Activated CD4-positive, alpha-beta T cell treated with anti-CD3 and anti-CD28 coated beads for 36 hours (primary cell): ENCODE measurements at regions of chr6 and their contacts with region 1.

Region 1: GRCh38 chr6:25263657-25264056 is 15.5 kb upstream of the CARMIL1 start:
- DNase-seq: no peak
- ATAC-seq: no peak
- H3K4me3 Mint-ChIP-seq: no peak overlapping the region
- H3K27ac Mint-ChIP-seq: no peak overlapping the region
- H3K4me1 Mint-ChIP-seq: peaks cover 2% of the 10 kb centered on the region
- H3K27me3 Mint-ChIP-seq: peaks cover 8% of the 10 kb centered on the region

Region 2: GRCh38 chr6:25147223-25147622 is 116.4 kb before region 1 on chr6:
- CTCF ChIA-PET with region 1: no interaction called
- POLR2A ChIA-PET with region 1: no interaction called
- intact Hi-C with region 1: no loop called
- DNase-seq: no peak
- ATAC-seq: peak; percentile 75
- H3K4me3 Mint-ChIP-seq: no peak overlapping the region
- H3K27ac Mint-ChIP-seq: no peak overlapping the region
- H3K4me1 Mint-ChIP-seq: peaks cover 26% of the 10 kb centered on the region
- H3K27me3 Mint-ChIP-seq: no peaks in the 10 kb centered on the region

Region 3: DNA sequence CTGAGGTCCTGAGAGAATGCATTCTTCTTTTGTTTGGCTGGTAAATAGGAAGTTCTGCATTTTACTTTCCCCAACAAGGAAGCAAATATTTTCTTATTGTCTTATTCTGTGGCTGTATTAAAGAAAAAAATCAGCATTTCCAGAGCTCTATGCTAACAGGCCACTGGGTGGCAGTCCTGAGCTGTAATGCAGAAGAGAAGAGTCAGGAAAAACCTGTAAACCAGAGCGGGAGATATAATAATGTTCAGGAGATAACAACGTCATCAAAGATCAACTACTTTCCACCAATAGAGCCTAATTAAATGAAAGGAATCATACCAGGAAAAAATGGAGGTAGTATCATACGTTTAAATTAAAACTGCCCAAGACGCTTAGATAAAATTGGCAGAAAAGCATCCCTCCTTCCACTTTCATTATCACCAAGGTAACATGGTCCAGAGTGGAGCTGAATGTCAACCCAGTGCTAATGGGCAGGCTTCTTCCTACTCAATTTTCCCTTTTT is 40.1 kb before region 1 on chr6:
- CTCF ChIA-PET with region 1: interaction called, 16 read pairs
- POLR2A ChIA-PET with region 1: no interaction called
- intact Hi-C with region 1: loop called in 1 of 2 experiments (anchors 2 kb)
- DNase-seq: peak; percentile 80
- ATAC-seq: peak; percentile 66
- H3K4me3 Mint-ChIP-seq: peak overlapping the region; percentile 58
- H3K27ac Mint-ChIP-seq: no peak overlapping the region
- H3K4me1 Mint-ChIP-seq: peaks cover 9% of the 10 kb centered on the region
- H3K27me3 Mint-ChIP-seq: peaks cover 10% of the 10 kb centered on the region

Region 4: GRCh38 chr6:25278914-25279747 is 15.5 kb after region 1 on chr6 and contains the start of gene CARMIL1:
- CTCF ChIA-PET with region 1: interaction called, 29 read pairs
- POLR2A ChIA-PET with region 1: no interaction called
- intact Hi-C with region 1: no loop called
- DNase-seq: peak; percentile 82
- ATAC-seq: peak; percentile 75
- H3K4me3 Mint-ChIP-seq: peak within 1 kb of the TSS; percentile 82
- H3K27ac Mint-ChIP-seq: peak within 1 kb of the TSS; percentile 79
- H3K4me1 Mint-ChIP-seq: peaks cover 38% of the 10 kb centered on the region
- H3K27me3 Mint-ChIP-seq: peaks cover 5% of the 10 kb centered on the region
- total RNA-seq, gene CARMIL1: 4.5 to 4.9 TPM

Region 5: DNA sequence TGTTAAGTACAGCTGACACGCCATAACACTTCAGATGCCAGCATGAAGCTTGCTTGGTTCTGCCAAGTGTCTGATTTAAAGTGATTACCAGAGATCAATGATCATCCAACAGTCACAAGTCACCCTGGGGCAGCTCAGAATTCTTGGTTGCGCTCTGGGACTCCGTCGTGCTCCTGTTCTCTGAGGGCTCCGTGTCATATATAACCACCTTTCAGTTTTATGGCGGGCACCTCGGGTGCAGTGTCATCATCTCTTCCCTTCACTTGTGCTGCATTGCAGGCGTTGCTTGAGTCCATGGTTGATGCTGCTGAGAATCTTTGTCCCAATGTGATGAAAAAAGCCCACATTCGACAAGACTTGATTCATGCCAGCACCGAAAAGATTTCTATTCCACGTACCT is 287.0 kb after region 1 on chr6:
- CTCF ChIA-PET with region 1: interaction called, 45 read pairs
- POLR2A ChIA-PET with region 1: no interaction called
- intact Hi-C with region 1: no loop called
- DNase-seq: no peak
- ATAC-seq: no peak
- H3K4me3 Mint-ChIP-seq: no peak overlapping the region
- H3K27ac Mint-ChIP-seq: no peak overlapping the region
- H3K4me1 Mint-ChIP-seq: no peaks in the 10 kb centered on the region
- H3K27me3 Mint-ChIP-seq: no peaks in the 10 kb centered on the region

Region 6: DNA sequence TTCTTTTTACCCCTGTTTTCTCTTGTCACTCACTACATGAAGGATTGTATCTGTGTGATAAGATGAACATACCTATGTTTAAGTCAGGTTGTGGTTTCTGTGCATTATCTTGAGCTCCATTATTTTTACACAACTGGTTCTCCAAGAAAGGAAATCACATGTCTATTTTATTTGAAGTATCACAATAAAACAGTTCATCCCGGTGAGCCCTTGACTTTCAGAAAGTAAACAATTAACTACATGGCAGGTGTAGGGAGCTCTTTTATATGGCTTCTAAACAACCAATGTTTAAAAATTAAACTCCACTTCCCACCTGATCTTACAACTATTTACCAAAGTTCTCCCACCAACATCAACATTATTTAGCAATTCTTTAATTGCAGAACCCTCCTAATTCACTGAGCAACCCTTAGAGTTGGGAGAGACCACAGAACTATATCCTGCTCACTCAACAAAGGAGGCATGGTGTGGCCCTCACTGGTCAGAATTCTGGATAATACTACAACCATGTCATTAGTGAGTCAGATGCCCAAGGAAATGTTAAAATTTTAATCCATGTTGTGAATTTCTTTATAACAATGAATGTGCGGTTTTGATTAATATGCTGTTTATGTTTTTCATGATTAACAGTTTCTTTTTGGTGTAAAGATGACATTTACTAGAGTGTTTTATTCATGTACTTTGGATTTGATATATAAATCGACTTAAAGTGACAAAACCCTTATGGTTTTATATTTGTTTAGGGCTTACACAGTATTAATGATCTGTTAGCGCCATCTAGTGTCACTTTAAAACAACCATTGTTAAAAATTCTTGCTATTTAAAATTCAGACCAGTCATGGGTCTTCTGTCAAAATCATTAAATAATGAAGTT is 338.4 kb after region 1 on chr6:
- CTCF ChIA-PET with region 1: interaction called, 14 read pairs
- POLR2A ChIA-PET with region 1: interaction called, 3 read pairs
- intact Hi-C with region 1: loop called (anchors 1 kb)
- DNase-seq: no peak
- ATAC-seq: no peak
- H3K4me3 Mint-ChIP-seq: no peak overlapping the region
- H3K27ac Mint-ChIP-seq: no peak overlapping the region
- H3K4me1 Mint-ChIP-seq: no peaks in the 10 kb centered on the region
- H3K27me3 Mint-ChIP-seq: no peaks in the 10 kb centered on the region